ENCODE measurements at regions of chrX and their contacts with region 1.

Region 1: DNA sequence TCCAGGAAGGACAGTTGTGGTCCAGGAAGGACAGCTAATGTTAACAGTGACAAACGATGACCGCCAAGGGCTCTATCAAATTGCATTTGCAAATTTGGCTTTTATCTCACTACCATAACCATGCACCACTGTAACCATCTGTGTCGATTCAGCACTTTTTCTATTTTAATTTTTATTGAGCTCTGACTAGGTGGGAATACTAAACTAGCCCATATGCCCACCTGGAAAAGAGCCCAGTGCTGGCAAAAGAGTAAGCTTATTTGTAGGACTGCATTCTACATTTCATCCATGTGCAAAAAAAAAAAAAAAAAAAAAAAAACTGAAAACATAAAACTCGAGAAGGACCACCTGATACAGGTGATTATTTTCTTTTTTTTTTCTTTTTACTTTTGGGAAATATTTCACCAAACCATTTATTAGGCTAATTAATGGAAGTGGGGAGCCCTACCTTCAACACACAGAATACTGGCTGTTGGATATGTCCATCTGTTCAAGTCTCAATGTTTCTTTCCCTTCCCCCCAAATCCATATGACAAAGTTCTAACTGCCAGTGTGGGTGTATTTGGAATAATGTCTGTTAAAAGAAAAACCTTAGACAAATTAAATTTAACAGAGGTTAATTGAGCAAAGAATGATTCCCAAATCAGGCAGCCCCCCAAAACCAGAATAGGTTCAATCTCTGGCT is 99.5 kb upstream of the MXRA5 start:
- DNase-seq: no peak
- H3K4me3 ChIP-seq: no peak overlapping the region
- H3K27ac ChIP-seq: no peak overlapping the region
- H3K4me1 ChIP-seq: no peaks in the 10 kb centered on the region
- H3K27me3 ChIP-seq: no peaks in the 10 kb centered on the region
- CTCF ChIP-seq: no peak
- POLR2A ChIP-seq: no peak

Region 2: DNA sequence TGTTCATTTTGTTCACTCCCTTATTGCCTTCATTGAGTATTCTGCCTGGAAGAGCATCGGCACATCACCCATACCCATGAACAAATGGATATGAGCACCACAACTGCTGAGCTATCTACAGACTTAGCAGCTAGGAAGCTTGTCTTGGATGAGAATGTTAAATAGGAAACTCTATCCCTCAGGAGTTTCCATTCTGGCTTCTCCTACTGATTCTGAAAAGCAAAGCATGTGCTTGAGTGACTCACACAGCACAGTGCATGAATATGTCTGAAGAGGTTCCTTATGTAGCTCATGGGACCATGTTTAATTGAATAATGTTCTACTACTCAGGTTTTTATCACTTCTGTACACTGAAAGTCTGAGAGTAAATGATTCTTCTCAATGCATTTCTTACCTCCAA is 42.2 kb before region 1 on chrX:
- intact Hi-C with region 1: loop called (anchors 2 kb)
- DNase-seq: no peak
- H3K4me3 ChIP-seq: no peak overlapping the region
- H3K27ac ChIP-seq: no peak overlapping the region
- H3K4me1 ChIP-seq: no peaks in the 10 kb centered on the region
- H3K27me3 ChIP-seq: no peaks in the 10 kb centered on the region
- CTCF ChIP-seq: no peak
- POLR2A ChIP-seq: no peak

Region 3: GRCh38 chrX:3435057-3435456 is 10.9 kb before region 1 on chrX:
- intact Hi-C with region 1: loop called (anchors 1 kb)
- DNase-seq: no peak
- H3K4me3 ChIP-seq: no peak overlapping the region
- H3K27ac ChIP-seq: no peak overlapping the region
- H3K4me1 ChIP-seq: no peaks in the 10 kb centered on the region
- H3K27me3 ChIP-seq: no peaks in the 10 kb centered on the region
- CTCF ChIP-seq: no peak
- POLR2A ChIP-seq: no peak